ENCODE measurements at regions of chr3 and their contacts with region 1.

Region 1: GRCh38 chr3:160027541-160028195 is 39.0 kb downstream of the IL12A start:
- DNase-seq: no peak
- H3K4me3 ChIP-seq: no peak overlapping the region
- H3K27ac ChIP-seq: peak overlapping the region in 1 of 2 experiments; percentile 63; a peak in 2 of 4 replicates
- H3K4me1 ChIP-seq: no peaks in the 10 kb centered on the region
- H3K27me3 ChIP-seq: no peaks in the 10 kb centered on the region
- CTCF ChIP-seq: no peak
- EP300 ChIP-seq: no peak
- RAD21 ChIP-seq: no peak

Region 2: DNA sequence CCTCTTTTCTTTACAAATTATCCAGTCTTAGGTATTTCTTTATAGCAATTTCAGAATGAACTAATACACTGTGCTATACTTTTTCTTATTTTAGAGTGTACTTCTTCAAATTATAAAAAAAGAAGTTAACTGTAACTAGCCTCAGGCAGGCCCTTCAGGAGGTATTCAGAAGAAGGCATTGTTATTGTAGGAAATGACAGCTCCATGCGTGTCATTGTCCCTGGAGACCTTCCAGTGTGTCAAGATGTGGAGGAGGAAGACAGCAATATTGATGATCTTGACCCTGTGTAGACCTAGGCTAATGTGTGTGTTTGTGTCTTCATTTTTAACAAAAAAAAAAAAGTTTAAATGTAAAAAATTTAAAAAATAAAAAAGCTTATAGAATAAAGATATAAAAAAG is 16.5 kb after region 1 on chr3:
- CTCF ChIA-PET with region 1: interaction called, 22 read pairs
- POLR2A ChIA-PET with region 1: no interaction called
- DNase-seq: no peak
- H3K4me3 ChIP-seq: no peak overlapping the region
- H3K27ac ChIP-seq: no peak overlapping the region
- H3K4me1 ChIP-seq: peaks cover 0 to 4% of the 10 kb centered on the region in 2 experiments; a peak in 2 of 4 replicates
- H3K27me3 ChIP-seq: no peaks in the 10 kb centered on the region
- CTCF ChIP-seq: no peak
- EP300 ChIP-seq: no peak
- RAD21 ChIP-seq: no peak

Region 3: DNA sequence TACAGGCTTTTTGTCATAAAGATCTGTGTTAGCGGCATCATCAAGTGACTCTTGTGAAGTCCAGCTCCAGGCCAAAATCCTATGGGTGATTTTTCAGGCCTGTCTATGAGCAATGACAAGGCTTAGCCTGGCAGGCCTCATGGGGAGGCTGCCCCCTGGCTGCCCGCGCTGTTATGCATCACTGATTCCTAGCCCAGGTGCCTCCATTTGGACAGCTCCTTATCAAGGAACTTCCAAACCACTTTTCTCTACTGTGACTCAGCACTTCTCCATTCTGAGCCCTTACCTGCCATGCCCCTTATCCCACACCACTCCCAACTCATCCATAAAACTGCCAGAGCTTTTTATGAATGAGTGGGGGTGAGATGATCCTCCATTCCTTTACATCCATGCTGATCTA is 106.1 kb after region 1 on chr3:
- CTCF ChIA-PET with region 1: interaction called, 14 read pairs
- POLR2A ChIA-PET with region 1: no interaction called
- DNase-seq: no peak
- H3K4me3 ChIP-seq: no peak overlapping the region
- H3K27ac ChIP-seq: no peak overlapping the region
- H3K4me1 ChIP-seq: peaks cover 8 to 19% of the 10 kb centered on the region in 2 experiments; a peak in 2 of 4 replicates
- H3K27me3 ChIP-seq: no peaks in the 10 kb centered on the region
- CTCF ChIP-seq: peak; percentile 39
- EP300 ChIP-seq: no peak
- RAD21 ChIP-seq: peak; percentile 16; the same call in 1 of the 2 replicates

Region 4: DNA sequence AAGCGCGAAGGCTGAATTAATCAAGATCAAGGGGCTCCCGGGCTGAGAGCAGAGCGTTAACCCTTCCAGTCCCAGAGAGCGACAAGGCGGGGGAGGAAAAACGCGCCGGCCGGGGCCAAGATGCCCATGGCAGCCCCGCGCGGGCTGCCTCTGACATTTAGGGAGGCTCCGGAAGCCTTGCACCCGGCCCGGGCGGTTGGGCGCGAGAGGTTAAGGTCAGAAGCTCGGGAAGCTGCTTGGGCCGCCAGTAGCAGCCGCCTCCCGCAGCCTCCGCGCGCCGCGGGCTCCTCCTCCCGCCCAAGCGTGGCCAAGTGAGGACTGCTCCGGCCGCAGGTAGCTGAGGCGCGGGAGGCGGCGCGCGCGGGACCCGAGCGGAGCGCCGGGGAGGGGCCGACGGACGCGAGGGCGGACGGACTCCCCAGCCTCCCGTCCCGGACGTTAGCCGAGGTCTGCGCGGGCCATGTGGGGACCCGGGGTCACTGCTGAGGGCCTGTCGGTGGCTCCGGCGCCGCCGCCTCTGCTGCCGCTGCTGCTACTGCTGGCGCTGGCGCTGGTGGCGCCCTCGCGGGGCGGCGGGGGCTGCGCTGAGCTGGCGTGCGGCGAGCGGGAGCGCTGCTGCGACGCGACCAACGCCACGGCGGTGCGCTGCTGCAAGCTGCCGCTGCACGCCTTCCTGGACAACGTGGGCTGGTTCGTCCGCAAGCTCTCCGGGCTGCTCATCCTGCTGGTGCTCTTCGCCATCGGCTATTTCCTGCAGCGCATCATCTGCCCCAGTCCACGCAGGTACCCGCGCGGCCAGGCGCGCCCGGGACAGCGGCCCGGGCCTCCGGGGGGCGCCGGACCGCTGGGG is 197.7 kb after region 1 on chr3 and contains the start of gene C3orf80:
- CTCF ChIA-PET with region 1: interaction called, 23 read pairs
- POLR2A ChIA-PET with region 1: no interaction called
- DNase-seq: peak; percentile 86
- H3K4me3 ChIP-seq: peak within 1 kb of the TSS; percentile 54 to 63
- H3K27ac ChIP-seq: no peak within 1 kb of the TSS
- H3K4me1 ChIP-seq: peaks cover 0 to 12% of the 10 kb centered on the region in 2 experiments; a peak in 1 of 4 replicates
- H3K27me3 ChIP-seq: peaks cover 23% of the 10 kb centered on the region
- CTCF ChIP-seq: peak; percentile 26; the same call in 1 of the 2 replicates
- EP300 ChIP-seq: no peak
- RAD21 ChIP-seq: no peak
- polyA plus RNA-seq, gene C3orf80: 0.02 TPM in 1 of 2 replicates, not detected in the other

Region 5: GRCh38 chr3:160302806-160303205 is 275.1 kb after region 1 on chr3:
- CTCF ChIA-PET with region 1: no interaction called
- POLR2A ChIA-PET with region 1: no interaction called
- DNase-seq: no peak
- H3K4me3 ChIP-seq: no peak overlapping the region
- H3K27ac ChIP-seq: no peak overlapping the region
- H3K4me1 ChIP-seq: no peaks in the 10 kb centered on the region
- H3K27me3 ChIP-seq: no peaks in the 10 kb centered on the region
- CTCF ChIP-seq: no peak
- EP300 ChIP-seq: no peak
- RAD21 ChIP-seq: no peak

Region 6: DNA sequence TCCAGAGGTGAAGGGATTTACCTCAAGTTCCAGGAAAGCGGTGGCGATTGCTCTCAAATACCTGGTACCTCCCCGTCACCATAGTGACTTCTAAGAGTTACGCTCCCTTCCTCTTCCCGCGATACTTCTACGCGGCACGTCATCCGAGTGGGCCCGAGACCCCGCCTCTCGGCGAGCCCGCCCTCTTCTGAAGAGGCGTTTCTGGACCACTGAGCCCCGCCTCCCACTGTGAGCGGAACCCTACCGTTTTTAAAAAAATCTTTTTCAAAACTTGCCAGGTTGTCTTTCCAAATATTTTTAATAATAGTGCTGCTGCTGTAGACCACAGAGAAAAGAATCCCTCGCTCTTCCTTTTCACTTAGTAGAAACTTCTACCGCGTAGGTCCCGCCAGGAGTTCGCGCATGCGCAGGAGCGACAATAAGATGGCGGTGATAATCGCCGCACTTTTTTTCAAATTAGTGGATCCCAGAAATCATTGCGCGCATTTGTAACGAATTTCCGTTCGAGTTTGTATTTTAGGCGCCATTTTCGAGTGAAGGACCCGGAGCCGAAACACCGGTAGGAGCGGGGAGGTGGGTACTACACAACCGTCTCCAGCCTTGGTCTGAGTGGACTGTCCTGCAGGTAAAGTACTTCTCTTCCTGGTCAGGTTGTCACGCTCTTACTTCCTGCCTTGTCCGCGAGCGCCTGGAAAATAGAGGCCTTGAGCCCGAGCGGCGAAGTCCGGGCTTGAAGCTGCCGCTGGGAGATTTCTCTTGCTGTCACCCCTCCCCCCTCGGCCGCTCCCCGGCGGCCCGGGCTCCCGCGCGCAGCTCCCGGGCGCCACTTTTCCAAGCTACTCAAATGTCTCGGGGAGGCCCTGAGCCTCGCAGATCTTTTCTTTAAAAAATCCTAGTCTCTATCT is 371.7 kb after region 1 on chr3 and contains the starts of genes IFT80 and SMC4:
- CTCF ChIA-PET with region 1: interaction called, 10 read pairs
- POLR2A ChIA-PET with region 1: no interaction called
- DNase-seq: peak; percentile 92
- H3K4me3 ChIP-seq: peak within 1 kb of the TSS; percentile 79 to 96
- H3K27ac ChIP-seq: peak within 1 kb of the TSS; percentile 88 to 94
- H3K4me1 ChIP-seq: peaks cover 10 to 12% of the 10 kb centered on the region in 2 experiments; a peak in 2 of 4 replicates
- H3K27me3 ChIP-seq: no peaks in the 10 kb centered on the region
- CTCF ChIP-seq: no peak
- EP300 ChIP-seq: peak; percentile 5 to 39; a peak in 1 of 4 replicates
- RAD21 ChIP-seq: no peak
- polyA plus RNA-seq, gene IFT80: 10.5 and 17.4 TPM in 2 replicates
- polyA plus RNA-seq, gene SMC4: 18.8 and 26.1 TPM in 2 replicates

Measured in SK-N-SH (cell line).